ENCODE measurements at regions of chr9 and their contacts with region 1.

Region 1: GRCh38 chr9:122931226-122932121 is at the start of gene ZBTB26:
- DNase-seq: no peak
- H3K4me3 ChIP-seq: peak within 1 kb of the TSS; percentile 92
- H3K27ac ChIP-seq: peak within 1 kb of the TSS; percentile 75
- H3K27me3 ChIP-seq: no peaks in the 10 kb centered on the region
- CTCF ChIP-seq: 0 out of 2 replicates have a peak, but pooled peaks have one; percentile 6
- polyA plus RNA-seq, gene ZBTB26: 8.2 and 9.6 TPM in 2 replicates

Region 2: DNA sequence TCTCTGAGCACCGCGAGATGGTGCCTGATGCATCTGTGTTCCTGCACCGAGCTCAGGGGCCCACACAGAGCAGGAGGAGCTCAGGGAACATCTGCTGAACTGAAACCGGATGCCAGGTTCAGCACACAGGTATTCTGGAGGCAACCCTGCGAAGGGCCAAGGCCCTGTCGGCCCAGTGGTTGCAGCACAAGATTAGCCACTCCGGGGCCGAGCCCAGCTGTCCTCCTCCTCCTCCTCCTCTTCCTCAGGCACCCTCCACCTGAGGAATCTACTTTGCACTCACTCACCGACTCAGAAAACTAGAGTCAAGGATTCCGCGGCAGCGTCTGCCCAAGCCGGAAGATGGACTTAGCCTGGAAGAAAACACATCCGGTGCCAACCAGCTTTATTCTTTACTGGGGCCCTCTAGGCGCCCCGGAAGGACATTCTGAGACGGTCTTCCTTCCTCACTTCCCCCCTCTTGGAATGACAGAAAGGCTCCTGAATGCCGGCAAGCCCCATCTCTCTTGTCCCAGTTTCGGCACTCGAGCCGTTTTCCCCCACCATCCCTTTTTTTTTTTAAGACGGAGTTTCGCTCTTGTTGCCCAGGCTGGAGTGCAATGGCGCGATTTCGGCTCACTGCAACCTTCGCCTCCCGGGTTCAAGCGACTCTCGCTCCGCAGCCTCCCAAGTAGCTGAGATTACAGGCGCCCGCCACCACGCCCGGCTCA is 18.4 kb before region 1 on chr9 and contains the start of gene ZBTB6:
- CTCF ChIA-PET with region 1: no interaction called
- POLR2A ChIA-PET with region 1: interaction called, 12 read pairs
- DNase-seq: peak; percentile 51
- H3K4me3 ChIP-seq: peak within 1 kb of the TSS; percentile 92
- H3K27ac ChIP-seq: peak within 1 kb of the TSS; percentile 89
- H3K27me3 ChIP-seq: no peaks in the 10 kb centered on the region
- CTCF ChIP-seq: no peak
- polyA plus RNA-seq, gene ZBTB6: 5.9 and 8.3 TPM in 2 replicates

Measured in AG04450 (cell line).